CD4-positive, alpha-beta T cell (primary cell): ENCODE measurements at regions of chr7 and their contacts with region 1.

Region 1: GRCh38 chr7:151936207-151936606 is 20.0 kb upstream of the GALNTL5 start:
- DNase-seq: peak in 3 of 14 experiments; percentile 76 to 84 (median 77)
- ATAC-seq: peak; percentile 88
- H3K4me3 ChIP-seq: peak overlapping the region; percentile 38
- H3K4me3 Mint-ChIP-seq: peak overlapping the region; percentile 87
- H3K27ac ChIP-seq: peak overlapping the region; percentile 49 to 80
- H3K27ac Mint-ChIP-seq: peak overlapping the region; percentile 89
- H3K4me1 ChIP-seq: peaks cover 18% of the 10 kb centered on the region
- H3K4me1 Mint-ChIP-seq: peaks cover 25% of the 10 kb centered on the region
- H3K27me3 ChIP-seq: no peaks in the 10 kb centered on the region
- H3K27me3 Mint-ChIP-seq: no peaks in the 10 kb centered on the region
- CTCF ChIP-seq: no peak

Region 2: GRCh38 chr7:151824373-151824933 is 111.8 kb before region 1 on chr7:
- CTCF ChIA-PET with region 1: no interaction called
- POLR2A ChIA-PET with region 1: no interaction called
- intact Hi-C with region 1: no loop called
- DNase-seq: no peak
- ATAC-seq: no peak
- H3K4me3 ChIP-seq: no peak overlapping the region
- H3K4me3 Mint-ChIP-seq: no peak overlapping the region
- H3K27ac ChIP-seq: no peak overlapping the region
- H3K27ac Mint-ChIP-seq: no peak overlapping the region
- H3K4me1 ChIP-seq: peaks cover 11% of the 10 kb centered on the region
- H3K4me1 Mint-ChIP-seq: peaks cover 20% of the 10 kb centered on the region
- H3K27me3 ChIP-seq: no peaks in the 10 kb centered on the region
- H3K27me3 Mint-ChIP-seq: no peaks in the 10 kb centered on the region
- CTCF ChIP-seq: no peak

Region 3: DNA sequence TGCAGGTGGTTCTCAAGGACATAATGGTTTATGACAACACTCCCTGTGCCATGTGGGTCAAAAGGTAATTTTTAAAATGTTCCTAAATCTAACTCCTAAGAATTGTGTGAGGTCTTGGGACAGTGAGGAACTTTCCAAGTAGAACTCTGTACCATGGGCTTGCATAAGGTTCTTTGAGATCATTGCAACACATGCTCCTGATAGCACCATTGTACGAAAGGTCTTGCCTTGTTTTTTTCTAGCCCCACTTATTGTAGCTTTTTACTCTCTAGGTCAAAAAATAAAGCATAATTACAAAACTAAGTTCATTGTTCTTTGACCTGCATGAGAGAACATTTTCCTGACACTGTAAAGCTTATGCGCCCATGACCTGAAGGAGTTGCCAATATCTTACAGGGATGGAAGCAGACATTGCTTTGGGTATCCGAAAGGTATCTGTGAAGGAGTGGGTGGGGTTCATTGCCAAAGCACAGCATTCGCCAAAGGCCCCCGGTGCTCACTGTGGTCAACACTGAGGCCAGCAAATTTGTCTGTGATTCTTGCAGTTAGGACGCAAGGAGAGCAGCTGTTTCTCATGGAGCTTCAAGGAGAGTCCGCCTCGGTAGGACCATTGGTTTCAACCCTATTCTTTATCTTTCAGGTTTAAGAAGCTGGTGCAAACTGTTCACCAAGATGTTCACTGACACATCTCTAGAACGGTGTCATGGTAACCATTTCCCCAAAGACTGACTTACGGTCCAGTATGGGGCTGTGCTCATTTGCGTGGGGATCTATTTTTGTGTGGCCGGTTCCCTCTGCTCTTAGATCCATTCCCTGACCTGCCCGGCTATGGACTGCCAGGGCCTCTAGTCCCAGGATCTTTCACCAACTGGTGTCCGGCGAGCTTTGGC is 51.6 kb before region 1 on chr7:
- CTCF ChIA-PET with region 1: no interaction called
- POLR2A ChIA-PET with region 1: no interaction called
- intact Hi-C with region 1: loop called in 1 of 2 experiments (anchors 5 kb)
- DNase-seq: no peak
- ATAC-seq: no peak
- H3K4me3 ChIP-seq: no peak overlapping the region
- H3K4me3 Mint-ChIP-seq: no peak overlapping the region
- H3K27ac ChIP-seq: no peak overlapping the region
- H3K27ac Mint-ChIP-seq: no peak overlapping the region
- H3K4me1 ChIP-seq: no peaks in the 10 kb centered on the region
- H3K4me1 Mint-ChIP-seq: no peaks in the 10 kb centered on the region
- H3K27me3 ChIP-seq: no peaks in the 10 kb centered on the region
- H3K27me3 Mint-ChIP-seq: peaks cover 24% of the 10 kb centered on the region
- CTCF ChIP-seq: no peak

Region 4: DNA sequence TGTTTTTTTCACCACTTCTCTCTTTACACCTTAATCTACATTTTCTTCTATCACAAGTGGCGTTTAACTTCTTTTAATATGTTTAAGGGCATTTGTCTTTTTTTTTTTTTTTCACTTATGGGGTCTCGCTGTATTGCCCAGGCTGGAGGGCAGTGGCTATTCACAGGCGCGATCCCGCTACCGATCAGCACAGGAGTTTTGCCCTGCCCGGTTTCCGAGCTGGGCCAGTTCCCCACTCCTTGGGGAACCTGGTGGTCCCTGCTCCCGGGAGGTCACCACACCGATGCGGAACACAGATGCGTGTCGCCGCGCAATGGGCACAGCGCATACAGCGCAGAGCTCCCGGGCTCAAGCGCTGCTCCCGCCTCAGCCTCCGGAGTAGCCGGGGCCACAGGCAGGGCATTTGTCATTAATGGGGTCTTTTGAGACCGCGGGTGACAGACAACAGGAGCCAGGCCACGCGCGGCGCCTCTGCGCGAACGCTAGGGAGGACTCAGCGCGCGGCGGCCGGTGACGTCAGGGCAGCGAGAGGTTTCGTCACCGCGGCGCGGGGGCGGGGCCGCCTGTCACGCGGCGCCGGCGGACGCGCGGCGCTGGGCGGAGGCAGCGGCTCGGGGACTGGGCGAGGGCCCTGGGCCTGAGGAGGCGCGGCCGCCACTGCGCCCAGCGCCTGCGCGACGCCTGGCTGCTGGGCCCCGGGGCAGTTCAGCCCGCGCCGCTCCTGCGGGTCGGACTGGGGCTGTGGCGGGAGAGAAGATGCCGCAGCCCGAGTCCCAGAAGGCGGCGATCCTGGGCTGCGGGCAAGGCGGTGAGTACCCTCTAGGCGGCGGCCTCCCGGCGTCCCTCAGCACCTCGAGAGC is 89.1 kb after region 1 on chr7 and contains the start of gene GALNT11:
- CTCF ChIA-PET with region 1: no interaction called
- POLR2A ChIA-PET with region 1: no interaction called
- intact Hi-C with region 1: loop called in 1 of 2 experiments (anchors 5 kb)
- DNase-seq: peak; percentile 72 to 96 (median 82)
- ATAC-seq: peak; percentile 92
- H3K4me3 ChIP-seq: peak within 1 kb of the TSS; percentile 96
- H3K4me3 Mint-ChIP-seq: peak within 1 kb of the TSS; percentile 96
- H3K27ac ChIP-seq: peak within 1 kb of the TSS in 1 of 2 donors; percentile 82
- H3K27ac Mint-ChIP-seq: peak within 1 kb of the TSS; percentile 96
- H3K4me1 ChIP-seq: peaks cover 30% of the 10 kb centered on the region
- H3K4me1 Mint-ChIP-seq: peaks cover 42% of the 10 kb centered on the region
- H3K27me3 ChIP-seq: no peaks in the 10 kb centered on the region
- H3K27me3 Mint-ChIP-seq: no peaks in the 10 kb centered on the region
- CTCF ChIP-seq: no peak
- total RNA-seq, gene GALNT11: 20.7 to 22.2 TPM